CD14-positive monocyte (primary cell): ENCODE measurements at regions of chr12 and their contacts with region 1.

Region 1: DNA sequence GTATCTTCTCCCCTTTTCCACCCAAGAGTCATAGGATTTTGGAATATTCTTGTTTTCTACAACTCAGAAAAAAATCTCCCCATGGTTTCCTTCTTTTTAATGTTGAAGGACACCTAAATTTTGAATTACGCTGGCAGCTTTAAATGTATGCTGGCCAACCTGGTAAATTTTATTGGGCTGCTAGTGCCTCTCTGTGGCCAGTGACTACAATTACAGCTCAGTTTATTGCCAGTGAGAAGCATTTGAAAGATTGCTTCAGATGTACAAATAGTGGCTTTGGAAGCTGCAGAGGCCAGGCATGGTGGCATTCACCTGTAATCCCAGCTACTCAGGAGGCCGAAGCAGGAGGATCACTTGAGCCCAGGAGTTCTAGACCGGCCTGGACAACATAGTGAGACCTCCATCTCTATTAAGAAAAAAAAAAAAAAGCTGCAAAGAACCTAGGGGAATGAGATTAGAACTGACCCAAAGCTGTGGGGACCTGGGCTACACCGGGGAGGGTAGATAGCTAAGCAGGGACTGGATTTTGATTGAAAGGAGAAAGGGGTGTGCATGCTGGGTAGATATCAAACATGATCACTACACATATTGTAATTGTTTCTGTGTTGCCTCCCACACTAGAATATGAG is 7.6 kb upstream of the RAB21 start:
- DNase-seq: peak; percentile 38 to 64 (median 60)
- H3K4me3 ChIP-seq: no peak overlapping the region
- H3K4me3 Mint-ChIP-seq: no peak overlapping the region
- H3K27ac ChIP-seq: no peak overlapping the region
- H3K27ac Mint-ChIP-seq: no peak overlapping the region
- H3K4me1 ChIP-seq: no peaks in the 10 kb centered on the region
- H3K4me1 Mint-ChIP-seq: no peaks in the 10 kb centered on the region
- H3K27me3 ChIP-seq: no peaks in the 10 kb centered on the region
- H3K27me3 Mint-ChIP-seq: peaks cover 7 to 16% (median 14%) of the 10 kb centered on the region in 3 donors
- CTCF ChIP-seq: peak; percentile 77

Region 2: DNA sequence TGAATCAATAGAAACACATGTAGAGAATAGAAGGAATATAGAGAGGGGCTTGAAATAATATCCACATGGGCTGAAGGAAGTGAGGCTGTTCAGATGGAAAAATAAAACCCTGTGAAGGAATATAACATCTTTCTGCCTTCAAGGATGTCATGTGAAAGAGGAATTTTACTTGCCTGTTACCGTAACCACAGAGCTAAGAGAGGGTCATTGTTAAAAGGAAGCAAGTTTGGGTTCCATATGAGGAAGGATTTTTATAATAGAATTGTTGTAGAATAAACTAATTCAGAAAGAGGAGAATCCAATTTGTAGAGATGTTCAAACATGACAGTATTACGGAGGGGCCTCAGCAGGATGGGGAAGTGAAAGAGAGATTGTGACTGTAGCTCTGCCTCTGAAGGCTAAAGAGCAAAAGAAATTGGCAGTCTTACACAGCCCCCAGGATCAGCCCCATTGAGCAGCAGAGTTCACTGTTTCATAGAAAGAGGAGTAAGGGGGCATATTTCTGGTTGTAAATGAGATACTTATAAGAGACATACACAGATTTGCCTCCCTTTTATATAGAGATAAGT is 784.8 kb before region 1 on chr12:
- intact Hi-C with region 1: no loop called
- DNase-seq: no peak
- H3K4me3 ChIP-seq: no peak overlapping the region
- H3K4me3 Mint-ChIP-seq: no peak overlapping the region
- H3K27ac ChIP-seq: no peak overlapping the region
- H3K27ac Mint-ChIP-seq: no peak overlapping the region
- H3K4me1 ChIP-seq: no peaks in the 10 kb centered on the region
- H3K4me1 Mint-ChIP-seq: no peaks in the 10 kb centered on the region
- H3K27me3 ChIP-seq: no peaks in the 10 kb centered on the region
- H3K27me3 Mint-ChIP-seq: peaks cover 0 to 2% (median 1%) of the 10 kb centered on the region in 3 donors
- CTCF ChIP-seq: no peak

Region 3: GRCh38 chr12:71415336-71416231 is 331.5 kb before region 1 on chr12:
- intact Hi-C with region 1: loop called (anchors 5 to 10 kb)
- DNase-seq: peak; percentile 2 to 16 (median 14)
- H3K4me3 ChIP-seq: no peak overlapping the region
- H3K4me3 Mint-ChIP-seq: no peak overlapping the region
- H3K27ac ChIP-seq: no peak overlapping the region
- H3K27ac Mint-ChIP-seq: no peak overlapping the region
- H3K4me1 ChIP-seq: no peaks in the 10 kb centered on the region
- H3K4me1 Mint-ChIP-seq: no peaks in the 10 kb centered on the region
- H3K27me3 ChIP-seq: no peaks in the 10 kb centered on the region
- H3K27me3 Mint-ChIP-seq: peaks cover 0 to 2% (median 0%) of the 10 kb centered on the region in 3 donors
- CTCF ChIP-seq: peak; percentile 74

Region 4: GRCh38 chr12:71610031-71610795 is 136.9 kb before region 1 on chr12:
- intact Hi-C with region 1: no loop called
- DNase-seq: peak; percentile 26 to 54 (median 44)
- H3K4me3 ChIP-seq: no peak overlapping the region
- H3K4me3 Mint-ChIP-seq: no peak overlapping the region
- H3K27ac ChIP-seq: peak overlapping the region in 1 of 2 donors; percentile 60
- H3K27ac Mint-ChIP-seq: peak overlapping the region in 6 of 7 donors; percentile 45 to 86 (median 55)
- H3K4me1 ChIP-seq: no peaks in the 10 kb centered on the region
- H3K4me1 Mint-ChIP-seq: peaks cover 4% of the 10 kb centered on the region
- H3K27me3 ChIP-seq: no peaks in the 10 kb centered on the region
- H3K27me3 Mint-ChIP-seq: peaks cover 0 to 3% (median 0%) of the 10 kb centered on the region in 3 donors
- CTCF ChIP-seq: no peak

Region 5: GRCh38 chr12:71708658-71709057 is 38.4 kb before region 1 on chr12:
- intact Hi-C with region 1: loop called in 1 of 2 experiments (anchors 5 kb)
- DNase-seq: no peak
- H3K4me3 ChIP-seq: no peak overlapping the region
- H3K4me3 Mint-ChIP-seq: no peak overlapping the region
- H3K27ac ChIP-seq: no peak overlapping the region
- H3K27ac Mint-ChIP-seq: no peak overlapping the region
- H3K4me1 ChIP-seq: no peaks in the 10 kb centered on the region
- H3K4me1 Mint-ChIP-seq: no peaks in the 10 kb centered on the region
- H3K27me3 ChIP-seq: no peaks in the 10 kb centered on the region
- H3K27me3 Mint-ChIP-seq: peaks cover 0 to 2% (median 0%) of the 10 kb centered on the region in 3 donors
- CTCF ChIP-seq: no peak